HepG2 (cell line): ENCODE measurements at regions of chr22 and their contacts with region 1.

Region 1: GRCh38 chr22:21666786-21667185 is 974 bp downstream of the PPIL2 start:
- DNase-seq: no peak
- ATAC-seq: no peak
- H3K4me3 ChIP-seq: peak overlapping the region; percentile 70 to 92 (median 87); a peak in 5 of 6 replicates
- H3K27ac ChIP-seq: peak overlapping the region; percentile 99
- H3K4me1 ChIP-seq: peaks cover 16% of the 10 kb centered on the region
- H3K27me3 ChIP-seq: no peaks in the 10 kb centered on the region
- CTCF ChIP-seq: no peak
- EP300 ChIP-seq: no peak
- POLR2A ChIP-seq: no peak
- RAD21 ChIP-seq: no peak

Region 2: DNA sequence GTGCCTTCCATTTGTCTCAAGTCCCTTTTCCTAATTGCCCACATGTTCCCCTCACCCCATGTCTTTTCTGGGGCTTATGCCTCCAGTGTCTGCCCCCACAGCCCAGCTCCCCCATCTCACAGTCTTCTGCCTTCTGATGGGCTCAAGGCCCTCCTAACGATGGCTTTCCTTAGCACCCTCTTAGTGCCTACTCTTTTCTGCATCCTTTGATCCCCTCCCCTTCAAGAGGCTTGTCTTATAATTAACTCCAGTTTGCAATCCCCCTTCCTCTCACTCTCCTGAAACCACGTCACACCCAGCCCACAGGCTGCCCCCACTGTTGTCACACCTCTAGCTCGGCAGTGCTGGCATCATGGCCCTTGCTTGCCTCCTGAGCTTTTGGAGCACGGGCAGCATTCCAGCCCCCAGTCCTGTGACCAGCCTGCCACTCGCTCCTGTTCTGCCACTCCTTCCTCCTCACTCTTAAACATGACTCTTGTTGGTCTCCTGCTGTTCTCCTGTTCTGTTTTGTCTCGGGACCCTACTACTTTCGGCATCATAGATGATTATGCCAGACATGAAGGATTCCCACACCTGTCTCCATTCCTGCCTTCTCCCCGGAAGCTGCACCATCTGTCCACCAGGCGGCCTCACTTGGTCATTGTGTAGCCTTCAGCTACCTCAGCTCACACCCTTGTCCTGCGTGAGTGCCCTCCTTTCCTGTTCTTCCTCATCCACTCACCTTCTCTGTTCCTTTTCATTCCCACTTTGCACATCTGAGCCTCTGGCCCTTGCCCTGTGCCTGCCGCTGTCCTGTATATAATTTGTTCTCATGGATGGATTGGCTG is 73.2 kb before region 1 on chr22:
- CTCF ChIA-PET with region 1: no interaction called
- POLR2A ChIA-PET with region 1: no interaction called
- in situ Hi-C with region 1: no loop called
- intact Hi-C with region 1: no loop called
- DNase-seq: peak; percentile 35
- ATAC-seq: peak; percentile 91
- H3K4me3 ChIP-seq: no peak overlapping the region
- H3K27ac ChIP-seq: no peak overlapping the region
- H3K4me1 ChIP-seq: no peaks in the 10 kb centered on the region
- H3K27me3 ChIP-seq: no peaks in the 10 kb centered on the region
- CTCF ChIP-seq: peak; percentile 63
- EP300 ChIP-seq: no peak
- POLR2A ChIP-seq: no peak
- RAD21 ChIP-seq: 0 out of 2 replicates have a peak, but pooled peaks have one; percentile 18

Region 3: GRCh38 chr22:21652010-21652546 is 14.7 kb before region 1 on chr22:
- CTCF ChIA-PET with region 1: no interaction called
- POLR2A ChIA-PET with region 1: interaction called, 17 read pairs
- in situ Hi-C with region 1: no loop called
- intact Hi-C with region 1: no loop called
- DNase-seq: peak; percentile 84
- ATAC-seq: peak; percentile 95
- H3K4me3 ChIP-seq: peak overlapping the region; percentile 64 to 86 (median 77)
- H3K27ac ChIP-seq: peak overlapping the region; percentile 77
- H3K4me1 ChIP-seq: peaks cover 33% of the 10 kb centered on the region
- H3K27me3 ChIP-seq: no peaks in the 10 kb centered on the region; a peak in 1 of 5 replicates
- CTCF ChIP-seq: no peak
- EP300 ChIP-seq: no peak
- POLR2A ChIP-seq: peak; percentile 56 to 65
- RAD21 ChIP-seq: no peak

Region 4: DNA sequence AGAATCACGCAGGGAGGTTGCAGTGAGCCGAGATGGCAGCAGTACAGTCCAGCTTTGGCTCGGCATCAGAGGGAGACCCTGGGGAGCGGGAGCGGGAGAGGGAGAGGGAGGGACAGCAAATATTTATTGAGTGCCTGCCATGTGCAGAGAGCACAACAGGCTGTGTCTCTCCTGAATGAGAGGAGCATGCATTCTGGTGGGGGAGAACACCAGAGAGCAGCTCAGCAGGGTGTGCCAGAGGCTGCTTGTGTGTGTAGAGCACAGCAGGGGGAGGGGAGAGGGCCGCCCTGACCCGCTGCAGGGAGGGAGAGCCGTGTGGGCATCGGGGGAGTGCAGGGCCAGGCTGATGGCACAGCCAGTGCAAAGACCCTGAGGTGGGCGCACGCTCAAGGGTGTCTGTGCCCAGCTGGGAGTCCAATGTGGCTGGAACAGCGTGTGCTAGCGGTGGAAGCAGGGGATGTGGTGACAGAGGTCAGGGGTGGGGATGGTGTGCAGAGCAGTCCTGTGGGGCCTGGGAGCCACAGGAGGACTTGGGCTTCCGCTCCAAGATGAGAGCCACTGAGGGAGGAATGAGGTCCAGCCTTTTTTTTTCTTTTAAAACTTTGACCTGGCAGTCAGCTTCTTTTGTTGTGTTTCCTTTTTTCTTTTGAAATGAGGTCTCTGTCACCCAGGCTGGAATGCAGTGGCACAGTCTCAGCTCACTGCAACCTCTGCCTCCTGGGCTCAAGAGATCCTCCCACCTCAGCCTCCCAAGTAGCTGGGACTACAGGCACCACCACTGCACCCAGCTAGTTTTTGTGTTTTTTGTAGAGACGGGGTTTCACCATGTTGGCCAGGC is 11.0 kb after region 1 on chr22:
- CTCF ChIA-PET with region 1: no interaction called
- POLR2A ChIA-PET with region 1: interaction called, 27 read pairs
- in situ Hi-C with region 1: no loop called
- intact Hi-C with region 1: no loop called
- DNase-seq: peak; percentile 91
- ATAC-seq: peak; percentile 97
- H3K4me3 ChIP-seq: peak overlapping the region in 2 of 3 experiments; percentile 43 to 62; a peak in 4 of 6 replicates
- H3K27ac ChIP-seq: peak overlapping the region; percentile 58
- H3K4me1 ChIP-seq: peaks cover 33% of the 10 kb centered on the region
- H3K27me3 ChIP-seq: no peaks in the 10 kb centered on the region; a peak in 1 of 5 replicates
- CTCF ChIP-seq: peak; percentile 51
- EP300 ChIP-seq: peak in 1 of 2 experiments; percentile 28; a peak in 1 of 4 replicates
- POLR2A ChIP-seq: no peak
- RAD21 ChIP-seq: no peak